A549 (cell line): ENCODE measurements at regions of chr1 and their contacts with region 1.

Region 1: GRCh38 chr1:15304701-15305467 is 57.9 kb downstream of the FHAD1 start:
- DNase-seq: peak; percentile 46 to 52
- ATAC-seq: peak; percentile 71 to 94
- H3K4me3 ChIP-seq: no peak overlapping the region
- H3K27ac ChIP-seq: peak overlapping the region; percentile 44 to 80; a peak in 4 of 6 replicates
- H3K4me1 ChIP-seq: peaks cover 6% of the 10 kb centered on the region; the same call in 2 of the 3 replicates
- CTCF ChIP-seq: peak; percentile 84
- EP300 ChIP-seq: no peak
- POLR2A ChIP-seq: no peak
- RAD21 ChIP-seq: peak; percentile 81 to 92

Region 2: DNA sequence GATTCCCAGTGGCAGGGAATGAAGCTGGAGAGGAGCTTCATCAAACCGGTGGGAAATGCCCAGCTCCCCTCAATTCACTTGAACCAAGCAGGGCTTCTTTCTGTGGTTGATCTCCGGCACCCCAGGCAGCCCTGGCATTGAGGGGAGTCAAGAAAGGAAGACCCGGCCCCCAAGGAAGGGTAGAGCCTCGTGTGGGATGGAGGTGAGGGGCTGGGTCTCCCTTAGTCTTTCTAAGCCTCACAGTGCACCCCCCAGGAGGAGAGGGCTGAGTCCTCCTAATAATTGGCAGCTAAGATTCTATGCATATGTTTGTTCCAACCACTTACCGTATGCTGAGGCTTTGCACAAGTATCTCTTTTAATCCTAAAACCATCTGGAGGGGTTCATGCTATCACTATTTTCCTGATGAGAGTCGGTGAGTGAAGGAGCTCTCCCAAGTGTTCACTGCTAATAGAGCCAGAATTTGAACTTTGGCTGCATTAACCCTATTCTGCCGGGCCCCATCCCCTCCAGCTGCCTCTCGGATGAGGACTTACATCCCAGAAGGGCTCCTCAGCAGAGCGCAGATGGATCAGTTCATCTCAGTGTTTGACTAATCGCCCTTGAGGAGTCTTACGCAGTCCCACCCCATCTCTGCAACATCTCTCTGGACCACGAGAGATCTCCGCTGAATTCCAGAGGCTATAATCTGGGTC is 184.5 kb before region 1 on chr1:
- CTCF ChIA-PET with region 1: interaction called, 10 read pairs
- POLR2A ChIA-PET with region 1: no interaction called
- DNase-seq: no peak
- ATAC-seq: no peak
- H3K4me3 ChIP-seq: no peak overlapping the region
- H3K27ac ChIP-seq: no peak overlapping the region
- H3K4me1 ChIP-seq: no peaks in the 10 kb centered on the region
- CTCF ChIP-seq: no peak
- EP300 ChIP-seq: no peak
- POLR2A ChIP-seq: no peak
- RAD21 ChIP-seq: no peak

Region 3: DNA sequence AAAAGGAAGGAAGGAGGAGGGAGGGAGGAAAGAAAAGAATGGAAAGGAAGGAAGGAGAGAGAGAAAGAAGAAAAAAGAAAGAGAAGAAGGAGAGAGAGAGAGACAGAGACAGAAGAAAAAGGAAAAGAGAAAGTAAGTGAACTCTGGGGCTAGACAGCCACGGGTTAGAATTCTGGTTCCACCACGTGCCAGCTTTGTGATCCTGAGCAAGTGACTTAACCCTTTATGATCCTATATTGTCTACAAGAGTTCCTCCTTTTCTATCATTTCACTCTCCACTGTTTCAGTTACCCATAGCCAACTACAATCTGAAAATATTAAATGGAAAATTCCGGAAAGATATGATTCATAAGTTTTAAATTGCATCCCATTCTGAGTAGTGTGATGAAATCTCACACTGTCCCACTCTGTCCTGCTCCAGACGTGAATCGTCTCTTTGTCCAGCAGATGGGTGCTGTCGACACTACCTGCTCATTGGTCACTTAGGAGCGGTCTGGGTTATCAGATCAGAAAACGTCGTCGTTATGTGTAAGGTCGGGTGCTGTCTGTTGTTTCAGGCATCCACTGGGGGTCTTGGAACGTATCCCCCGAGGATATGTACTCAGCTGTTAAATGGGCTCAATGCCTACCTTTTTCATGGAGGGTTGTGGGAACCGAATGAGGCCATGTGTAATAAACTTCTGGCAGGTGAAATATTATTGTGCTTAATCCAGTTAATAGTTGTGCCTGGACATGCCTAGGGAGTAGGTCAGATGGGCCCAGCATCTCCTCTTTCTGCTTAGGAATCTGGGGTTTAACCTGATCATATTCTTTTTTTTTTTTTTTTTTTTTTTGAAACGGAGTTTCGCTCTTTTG is 132.3 kb before region 1 on chr1:
- CTCF ChIA-PET with region 1: no interaction called
- POLR2A ChIA-PET with region 1: no interaction called
- DNase-seq: no peak
- ATAC-seq: peak; percentile 7 to 43; a peak in 2 of 6 replicates
- H3K4me3 ChIP-seq: no peak overlapping the region
- H3K27ac ChIP-seq: peak overlapping the region; percentile 70 to 87
- H3K4me1 ChIP-seq: peaks cover 83% of the 10 kb centered on the region
- CTCF ChIP-seq: no peak
- EP300 ChIP-seq: no peak
- POLR2A ChIP-seq: no peak
- RAD21 ChIP-seq: no peak

Region 4: DNA sequence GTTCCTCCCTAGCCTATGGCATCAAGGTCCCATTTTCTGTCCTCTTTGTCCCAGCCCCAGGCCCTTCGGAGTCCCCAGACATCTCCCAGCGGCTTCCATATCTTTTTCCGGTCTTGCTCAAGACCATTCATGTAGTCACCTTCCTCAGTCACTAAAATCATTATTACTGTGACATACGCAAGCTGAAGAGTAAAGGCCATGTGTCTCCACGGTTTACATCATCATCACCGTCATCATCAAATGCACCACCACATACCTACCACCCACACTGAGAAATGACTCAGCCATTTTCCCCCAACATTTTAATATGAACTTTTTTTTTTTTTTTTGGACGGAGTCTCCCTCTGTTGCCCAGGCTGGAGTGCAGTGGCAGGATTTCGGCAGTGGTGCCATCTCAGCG is 14.5 kb before region 1 on chr1:
- CTCF ChIA-PET with region 1: interaction called, 12 read pairs
- POLR2A ChIA-PET with region 1: interaction called, 4 read pairs
- DNase-seq: peak in 1 of 2 experiments; percentile 63
- ATAC-seq: peak; percentile 24 to 37; a peak in 2 of 6 replicates
- H3K4me3 ChIP-seq: no peak overlapping the region
- H3K27ac ChIP-seq: peak overlapping the region; percentile 57 to 83; a peak in 5 of 6 replicates
- H3K4me1 ChIP-seq: peaks cover 8% of the 10 kb centered on the region; the same call in 2 of the 3 replicates
- CTCF ChIP-seq: no peak
- EP300 ChIP-seq: peak in 1 of 2 experiments; percentile 36; a peak in 1 of 5 replicates
- POLR2A ChIP-seq: no peak
- RAD21 ChIP-seq: no peak